ENCODE measurements at regions of chr20 and their contacts with region 1.

Region 1: GRCh38 chr20:35269055-35269781 is 8.7 kb downstream of the MMP24OS start:
- DNase-seq: peak; percentile 77
- ATAC-seq: peak; percentile 82
- H3K4me3 ChIP-seq: peak overlapping the region in 1 of 3 experiments; percentile 35; a peak in 2 of 6 replicates
- H3K27ac ChIP-seq: no peak overlapping the region
- H3K4me1 ChIP-seq: peaks cover 19% of the 10 kb centered on the region
- H3K27me3 ChIP-seq: no peaks in the 10 kb centered on the region
- CTCF ChIP-seq: peak; percentile 100
- EP300 ChIP-seq: peak in 1 of 2 experiments; percentile 69; a peak in 1 of 4 replicates
- POLR2A ChIP-seq: no peak
- RAD21 ChIP-seq: peak; percentile 98

Region 2: DNA sequence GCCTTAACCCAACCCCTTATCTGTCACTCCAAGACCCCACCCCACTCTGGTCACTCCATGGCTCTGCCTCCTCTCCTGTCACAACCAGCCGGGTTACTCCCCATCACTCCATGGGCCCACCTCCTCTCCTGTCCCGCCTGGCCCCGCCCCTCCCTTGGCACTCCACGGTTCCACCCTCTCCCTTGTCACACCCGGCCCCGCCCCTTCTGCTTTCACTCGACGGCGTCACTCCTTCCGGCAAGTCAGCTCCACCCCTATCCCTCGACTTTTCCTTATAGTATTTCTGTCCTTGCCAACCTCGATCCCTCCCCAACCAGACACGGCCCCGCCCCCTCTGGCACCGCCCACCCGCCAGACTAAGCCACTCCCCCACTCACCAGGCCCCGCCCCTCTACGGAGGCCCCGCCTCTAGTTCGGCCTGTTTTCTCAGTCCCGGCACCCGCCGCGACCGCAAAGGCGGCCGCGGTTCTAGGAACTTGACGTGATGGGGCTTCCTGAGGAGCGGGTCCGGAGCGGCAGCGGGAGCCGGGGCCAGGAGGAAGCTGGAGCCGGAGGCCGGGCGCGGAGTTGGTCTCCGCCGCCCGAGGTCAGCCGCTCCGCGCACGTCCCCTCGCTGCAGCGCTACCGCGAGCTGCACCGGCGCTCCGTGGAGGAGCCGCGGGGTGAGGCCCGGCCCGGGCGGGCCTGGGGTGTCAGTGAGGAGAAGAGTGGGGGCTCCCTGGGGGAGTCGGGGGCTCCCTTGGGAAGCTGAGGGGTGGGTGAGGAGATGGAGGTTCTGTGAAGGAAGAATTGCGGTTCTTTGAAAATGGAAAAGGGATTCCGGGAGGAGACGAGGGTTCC is 392.8 kb before region 1 on chr20 and contains the start of gene ACSS2:
- CTCF ChIA-PET with region 1: interaction called, 7 read pairs
- POLR2A ChIA-PET with region 1: interaction called, 4 read pairs
- in situ Hi-C with region 1: loop called (anchors 10 kb)
- intact Hi-C with region 1: loop called (anchors 1 kb)
- DNase-seq: peak; percentile 99
- ATAC-seq: peak; percentile 83
- H3K4me3 ChIP-seq: peak within 1 kb of the TSS; percentile 85 to 95 (median 93)
- H3K27ac ChIP-seq: peak within 1 kb of the TSS; percentile 71
- H3K4me1 ChIP-seq: peaks cover 61% of the 10 kb centered on the region
- H3K27me3 ChIP-seq: peaks cover 0 to 5% of the 10 kb centered on the region in 2 experiments; a peak in 1 of 5 replicates
- CTCF ChIP-seq: no peak
- EP300 ChIP-seq: peak in 1 of 2 experiments; percentile 49; a peak in 2 of 4 replicates
- POLR2A ChIP-seq: peak; percentile 61 to 88
- RAD21 ChIP-seq: peak; percentile 65
- total RNA-seq, gene ACSS2: 89.7 and 91.7 TPM in 2 replicates

Region 3: GRCh38 chr20:35092524-35093266 is 176.5 kb before region 1 on chr20 and contains the start of gene TRPC4AP:
- CTCF ChIA-PET with region 1: interaction called, 23 read pairs
- POLR2A ChIA-PET with region 1: interaction called, 8 read pairs
- in situ Hi-C with region 1: no loop called
- intact Hi-C with region 1: loop called (anchors 1 kb)
- DNase-seq: peak; percentile 92
- ATAC-seq: peak; percentile 92
- H3K4me3 ChIP-seq: peak within 1 kb of the TSS; percentile 82 to 99 (median 82)
- H3K27ac ChIP-seq: peak within 1 kb of the TSS; percentile 82
- H3K4me1 ChIP-seq: peaks cover 61% of the 10 kb centered on the region
- H3K27me3 ChIP-seq: peaks cover 0 to 4% of the 10 kb centered on the region in 2 experiments; a peak in 1 of 5 replicates
- CTCF ChIP-seq: peak; percentile 99
- EP300 ChIP-seq: peak in 1 of 2 experiments; percentile 66; a peak in 3 of 4 replicates
- POLR2A ChIP-seq: peak; percentile 82 to 85
- RAD21 ChIP-seq: peak; percentile 77
- total RNA-seq, gene TRPC4AP: 136 and 161 TPM in 2 replicates

Region 4: DNA sequence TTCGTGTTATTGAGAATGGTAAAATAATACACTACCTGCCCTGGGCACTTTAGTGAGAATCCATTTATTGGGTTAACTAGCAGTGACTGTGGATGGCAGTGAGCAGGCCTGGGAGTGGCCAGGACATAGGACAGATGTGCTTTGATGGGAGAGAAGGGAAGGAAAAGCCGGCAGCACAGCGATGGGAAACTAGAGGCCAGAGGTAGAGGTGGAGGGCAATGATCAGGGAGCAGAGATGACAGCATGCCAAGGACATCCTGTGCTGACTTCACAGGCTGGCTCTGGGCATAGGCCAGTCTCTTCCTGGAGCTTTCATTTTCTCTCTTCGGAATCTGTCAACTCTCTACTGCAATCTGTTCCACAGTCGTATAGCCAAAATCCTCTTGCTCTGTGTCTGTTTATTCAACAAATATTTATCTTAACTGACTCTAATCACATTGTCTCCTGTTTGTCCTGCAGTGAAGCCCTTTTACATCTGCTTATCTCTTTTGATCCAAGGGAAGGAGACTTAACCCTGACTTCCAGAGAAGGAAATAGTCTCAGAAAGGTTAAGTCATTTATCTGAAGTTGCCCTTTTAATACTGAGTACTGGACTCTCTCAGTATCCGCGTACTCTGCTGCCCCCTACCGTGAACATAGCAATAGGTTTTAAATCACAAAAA is 61.1 kb before region 1 on chr20:
- CTCF ChIA-PET with region 1: interaction called, 5 read pairs
- POLR2A ChIA-PET with region 1: interaction called, 3 read pairs
- in situ Hi-C with region 1: no loop called
- intact Hi-C with region 1: loop called (anchors 1 kb)
- DNase-seq: peak; percentile 89
- ATAC-seq: peak; percentile 98
- H3K4me3 ChIP-seq: peak overlapping the region in 2 of 3 experiments; percentile 23 to 40; a peak in 4 of 6 replicates
- H3K27ac ChIP-seq: peak overlapping the region; percentile 46
- H3K4me1 ChIP-seq: peaks cover 18% of the 10 kb centered on the region
- H3K27me3 ChIP-seq: no peaks in the 10 kb centered on the region
- CTCF ChIP-seq: peak; percentile 97
- EP300 ChIP-seq: peak in 1 of 2 experiments; percentile 58; a peak in 1 of 4 replicates
- POLR2A ChIP-seq: no peak
- RAD21 ChIP-seq: peak; percentile 97

Region 5: GRCh38 chr20:35284267-35284991 is 15.2 kb after region 1 on chr20 and contains the start of gene EIF6:
- CTCF ChIA-PET with region 1: no interaction called
- POLR2A ChIA-PET with region 1: interaction called, 80 read pairs
- in situ Hi-C with region 1: no loop called
- intact Hi-C with region 1: no loop called
- DNase-seq: peak; percentile 99
- ATAC-seq: peak; percentile 76
- H3K4me3 ChIP-seq: peak within 1 kb of the TSS; percentile 80 to 98 (median 81)
- H3K27ac ChIP-seq: peak within 1 kb of the TSS; percentile 95
- H3K4me1 ChIP-seq: peaks cover 74% of the 10 kb centered on the region
- H3K27me3 ChIP-seq: peaks cover 0 to 2% of the 10 kb centered on the region in 2 experiments; a peak in 2 of 5 replicates
- CTCF ChIP-seq: peak; percentile 19; the same call in 1 of the 2 replicates
- EP300 ChIP-seq: peak; percentile 43 to 59; a peak in 3 of 4 replicates
- POLR2A ChIP-seq: peak; percentile 94 to 96
- RAD21 ChIP-seq: peak; percentile 44
- total RNA-seq, gene EIF6: 462 and 603 TPM in 2 replicates